Ascending aorta (tissue), 2 donors: ENCODE measurements at regions of chr6 and their contacts with region 1.

Region 1: GRCh38 chr6:88982720-88983119 is 19.3 kb upstream of the RNGTT start:
- DNase-seq: peak; percentile 43 to 91
- H3K4me3 ChIP-seq: peak overlapping the region; percentile 15 to 33
- H3K27ac ChIP-seq: no peak overlapping the region
- H3K4me1 ChIP-seq: peaks cover 4 to 7% of the 10 kb centered on the region in 2 donors
- H3K27me3 ChIP-seq: no peaks in the 10 kb centered on the region
- CTCF ChIP-seq: peak; percentile 53 to 74 (median 64)

Region 2: DNA sequence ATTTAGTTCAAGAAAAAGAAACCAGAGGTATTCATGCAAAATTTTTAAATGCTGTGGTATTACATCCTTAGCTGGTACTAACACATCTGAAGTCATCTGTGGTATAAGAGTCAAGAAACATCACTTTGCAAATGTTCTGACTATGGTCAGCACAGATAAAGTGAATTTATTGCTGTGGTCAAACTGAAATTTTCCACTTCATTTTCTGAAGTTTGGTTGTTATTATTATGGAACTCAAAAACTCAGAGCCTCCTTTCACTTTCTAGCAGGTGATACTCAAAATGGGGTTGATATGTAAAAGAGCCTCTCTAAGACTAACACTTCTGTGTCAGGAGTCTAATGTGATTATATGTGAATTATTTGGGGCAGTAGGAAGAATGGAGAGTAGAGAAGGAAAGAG is 277.1 kb before region 1 on chr6:
- intact Hi-C with region 1: no loop called
- DNase-seq: no peak
- H3K4me3 ChIP-seq: no peak overlapping the region
- H3K27ac ChIP-seq: no peak overlapping the region
- H3K4me1 ChIP-seq: peaks cover 0 to 2% of the 10 kb centered on the region in 2 donors
- H3K27me3 ChIP-seq: no peaks in the 10 kb centered on the region
- CTCF ChIP-seq: no peak

Region 3: GRCh38 chr6:88780714-88781389 is 201.9 kb before region 1 on chr6:
- intact Hi-C with region 1: no loop called
- DNase-seq: no peak
- H3K4me3 ChIP-seq: no peak overlapping the region
- H3K27ac ChIP-seq: no peak overlapping the region
- H3K4me1 ChIP-seq: no peaks in the 10 kb centered on the region
- H3K27me3 ChIP-seq: no peaks in the 10 kb centered on the region
- CTCF ChIP-seq: peak; percentile 59 to 89 (median 75)

Region 4: DNA sequence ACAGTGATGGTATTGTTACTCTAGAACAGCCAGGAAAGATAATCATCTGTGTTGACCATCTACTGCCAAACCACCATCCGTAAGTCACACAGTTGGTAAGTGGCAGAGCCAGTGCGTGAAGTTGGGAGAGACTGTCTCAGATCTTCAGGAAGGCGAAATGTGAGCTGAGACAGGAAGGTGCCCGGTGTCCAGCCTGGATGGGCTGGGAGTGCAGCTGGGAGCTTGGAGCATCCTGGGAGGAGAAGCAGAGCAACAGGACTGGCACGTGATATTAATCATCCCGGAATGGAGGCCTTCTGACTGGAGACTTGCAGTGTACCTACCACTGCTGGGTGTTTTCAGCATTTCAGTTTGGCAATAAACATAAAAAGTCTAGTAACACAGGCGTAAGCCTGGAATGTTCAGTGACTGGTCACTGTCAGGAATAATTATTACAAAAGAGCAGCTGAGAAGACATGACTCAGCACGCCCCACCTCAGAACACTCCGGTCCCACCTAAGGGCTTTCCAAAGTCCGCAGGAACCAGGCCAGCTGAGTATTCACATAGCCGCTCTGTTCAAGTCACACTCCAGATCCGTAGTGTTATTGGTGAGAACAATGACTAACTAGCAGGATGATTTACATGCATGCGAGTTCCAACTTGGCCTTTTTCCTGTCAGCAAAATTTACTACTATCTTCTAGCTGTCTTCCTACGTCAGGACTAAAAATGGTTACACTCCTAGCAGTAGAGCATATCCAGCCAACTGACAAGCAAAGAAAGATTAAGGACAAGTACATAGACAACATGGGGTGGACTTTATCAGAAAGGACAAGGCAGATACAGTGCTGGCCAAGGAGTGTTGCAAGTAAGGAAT is 52.8 kb after region 1 on chr6:
- intact Hi-C with region 1: loop called (anchors 2 kb)
- DNase-seq: peak; percentile 78 to 95
- H3K4me3 ChIP-seq: peak overlapping the region; percentile 1 to 15
- H3K27ac ChIP-seq: peak overlapping the region; percentile 86 to 87
- H3K4me1 ChIP-seq: peaks cover 4 to 17% of the 10 kb centered on the region in 2 donors
- H3K27me3 ChIP-seq: no peaks in the 10 kb centered on the region
- CTCF ChIP-seq: no peak

Region 5: DNA sequence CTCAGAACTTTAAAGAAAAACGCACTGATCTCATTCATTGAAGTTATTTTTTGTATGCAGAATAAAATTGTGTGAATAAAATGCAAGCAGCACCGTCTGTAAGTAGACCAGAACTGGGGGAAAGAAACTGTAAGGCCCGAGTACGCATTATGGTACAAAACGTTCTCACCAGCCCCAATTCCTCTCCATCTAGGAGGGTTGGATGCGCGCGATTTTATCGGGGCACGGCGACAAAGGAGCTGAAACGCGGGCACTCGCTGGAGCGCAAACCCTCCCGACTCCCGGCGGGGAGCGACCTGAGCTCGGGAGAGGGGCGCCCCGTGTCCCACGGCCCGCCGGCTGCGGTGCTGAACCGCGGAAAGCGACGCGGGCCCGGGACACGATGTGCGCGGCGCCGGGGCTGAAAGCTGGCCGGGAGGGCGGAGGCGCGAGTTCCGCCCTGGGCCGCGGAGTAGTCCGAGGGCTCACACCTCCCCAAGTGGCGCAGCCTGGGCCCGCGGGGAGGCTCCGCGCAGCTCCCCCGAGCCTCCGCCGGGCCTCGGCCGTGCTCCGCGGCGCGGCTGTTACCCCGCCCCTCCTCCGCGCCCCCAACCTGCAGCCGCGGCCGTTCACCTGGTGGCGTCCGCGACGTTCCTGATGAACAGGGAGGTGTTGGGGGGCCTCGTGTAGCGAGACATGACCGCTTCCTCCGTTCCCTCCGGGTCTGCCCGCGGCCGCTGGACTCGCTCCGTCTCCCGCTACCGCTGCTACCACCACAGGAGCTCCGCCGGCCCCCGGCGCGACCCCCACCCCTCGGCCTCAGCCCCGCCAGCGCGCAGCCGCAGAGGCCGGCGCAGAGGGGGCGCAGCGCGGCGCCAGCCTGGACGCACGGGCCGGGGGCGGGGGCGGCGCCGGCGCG is 134.7 kb after region 1 on chr6 and contains the start of gene SRSF12:
- intact Hi-C with region 1: loop called (anchors 1 kb)
- DNase-seq: peak in 1 of 2 donors; percentile 70
- H3K4me3 ChIP-seq: peak within 1 kb of the TSS; percentile 71 to 90
- H3K27ac ChIP-seq: peak within 1 kb of the TSS; percentile 38 to 56
- H3K4me1 ChIP-seq: peaks cover 0 to 7% of the 10 kb centered on the region in 2 donors
- H3K27me3 ChIP-seq: no peaks in the 10 kb centered on the region
- CTCF ChIP-seq: no peak
- total RNA-seq, gene SRSF12: 0.53 TPM

Region 6: GRCh38 chr6:89122625-89123024 is 139.9 kb after region 1 on chr6:
- intact Hi-C with region 1: loop called (anchors 1 kb)
- DNase-seq: no peak
- H3K4me3 ChIP-seq: no peak overlapping the region
- H3K27ac ChIP-seq: no peak overlapping the region
- H3K4me1 ChIP-seq: peaks cover 0 to 7% of the 10 kb centered on the region in 2 donors
- H3K27me3 ChIP-seq: no peaks in the 10 kb centered on the region
- CTCF ChIP-seq: peak in 2 of 3 experiments; percentile 48 to 65

Region 7: DNA sequence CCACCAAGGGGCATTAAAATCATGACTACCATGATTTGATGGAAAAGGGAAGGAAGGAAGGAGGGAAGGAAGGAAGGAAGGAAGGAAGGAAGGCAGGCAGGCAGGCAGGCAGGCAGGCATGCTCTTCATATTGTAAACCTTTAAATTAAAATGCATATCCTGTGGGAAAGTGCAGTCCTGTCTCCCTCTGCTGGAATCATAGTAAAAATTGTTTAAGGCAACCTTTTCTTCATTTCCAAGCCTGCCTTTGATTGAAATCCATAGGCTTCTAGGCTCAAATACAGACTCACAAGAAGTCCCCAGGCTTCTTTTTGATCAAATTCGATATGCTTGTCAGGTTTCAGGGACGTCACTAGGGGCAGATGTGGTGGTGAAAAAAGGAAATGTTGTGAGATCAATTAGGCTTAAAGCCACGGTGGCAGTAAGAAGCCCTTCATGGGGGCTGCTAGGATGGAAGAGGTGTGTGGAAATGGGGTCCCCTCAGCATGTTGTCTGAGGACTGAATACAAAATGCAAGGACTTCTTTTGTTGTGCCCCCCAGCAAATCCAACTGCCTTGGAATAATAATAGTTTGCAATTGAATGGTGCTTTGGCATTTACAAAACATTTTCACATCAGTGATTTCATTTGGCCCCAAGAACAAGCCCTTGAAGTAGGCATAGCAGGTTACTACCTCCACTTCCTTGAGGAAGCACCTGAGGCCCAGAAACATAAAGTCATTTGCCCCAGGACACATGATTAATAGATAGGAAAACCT is 260.0 kb after region 1 on chr6:
- intact Hi-C with region 1: loop called (anchors 2 kb)
- DNase-seq: no peak
- H3K4me3 ChIP-seq: no peak overlapping the region
- H3K27ac ChIP-seq: no peak overlapping the region
- H3K4me1 ChIP-seq: no peaks in the 10 kb centered on the region
- H3K27me3 ChIP-seq: no peaks in the 10 kb centered on the region
- CTCF ChIP-seq: peak; percentile 34 to 66 (median 47)